IMR-90 (cell line): ENCODE measurements at regions of chr5 and their contacts with region 1.

Region 1: DNA sequence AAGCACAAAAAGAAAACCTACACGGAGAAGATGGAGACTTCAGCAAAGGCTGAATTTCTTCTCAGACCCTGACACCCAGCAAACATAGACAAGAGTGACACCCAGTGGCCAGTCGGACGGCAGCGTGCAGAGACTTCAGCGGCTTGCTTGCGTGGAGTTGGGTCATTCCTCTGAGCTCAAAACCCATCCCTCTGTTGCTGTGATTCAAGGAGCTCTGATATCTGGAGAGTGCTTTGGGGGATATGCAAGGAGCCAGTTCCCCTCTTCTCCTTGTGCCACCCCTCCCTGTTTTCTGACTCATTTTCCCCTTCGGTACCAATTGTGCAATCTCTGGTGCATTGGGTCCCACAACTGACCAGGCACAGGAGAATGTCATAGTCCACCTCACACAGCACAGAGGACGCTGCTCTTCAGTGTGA is 27.5 kb downstream of the SH3TC2 start:
- DNase-seq: peak; percentile 83
- ATAC-seq: peak; percentile 87
- H3K4me3 ChIP-seq: no peak overlapping the region
- H3K27ac ChIP-seq: no peak overlapping the region
- H3K4me1 ChIP-seq: peaks cover 9% of the 10 kb centered on the region
- H3K27me3 ChIP-seq: no peaks in the 10 kb centered on the region
- CTCF ChIP-seq: peak; percentile 98
- POLR2A ChIP-seq: peak; percentile 34; the same call in 1 of the 2 replicates
- RAD21 ChIP-seq: peak; percentile 98

Region 2: DNA sequence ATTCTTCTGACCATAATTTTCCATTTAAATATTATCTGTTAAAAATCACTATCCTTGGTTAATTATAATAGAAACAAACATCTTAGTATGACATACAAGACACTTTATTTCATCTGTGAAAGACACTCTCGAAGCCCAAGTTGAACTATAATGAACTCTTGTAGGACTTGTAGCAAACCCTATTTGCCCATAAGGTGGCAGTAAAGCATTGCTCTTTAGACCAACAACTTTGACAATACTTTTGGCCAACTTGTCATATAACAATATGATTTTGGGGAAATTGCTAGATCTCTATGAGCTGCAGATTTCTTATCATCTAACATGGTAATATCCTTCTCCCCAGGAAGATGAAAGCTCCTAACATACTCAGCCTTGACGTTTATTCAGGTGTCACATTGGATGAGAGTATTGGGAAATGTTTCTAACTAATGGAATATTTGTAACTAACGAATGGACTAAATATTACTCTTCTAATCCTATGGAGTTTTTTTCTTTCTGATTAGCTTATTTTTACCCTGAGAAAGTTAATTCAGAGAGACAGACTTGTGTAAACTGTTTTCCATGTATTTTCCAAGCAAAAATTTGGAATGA is 856.1 kb before region 1 on chr5:
- CTCF ChIA-PET with region 1: no interaction called
- POLR2A ChIA-PET with region 1: no interaction called
- dilution Hi-C with region 1: no loop called
- in situ Hi-C with region 1: loop called (anchors 25 kb)
- intact Hi-C with region 1: loop called (anchors 5 kb)
- DNase-seq: peak; percentile 63
- ATAC-seq: peak; percentile 72
- H3K4me3 ChIP-seq: no peak overlapping the region
- H3K27ac ChIP-seq: no peak overlapping the region
- H3K4me1 ChIP-seq: no peaks in the 10 kb centered on the region
- H3K27me3 ChIP-seq: no peaks in the 10 kb centered on the region
- CTCF ChIP-seq: peak; percentile 65
- POLR2A ChIP-seq: no peak
- RAD21 ChIP-seq: peak; percentile 78

Region 3: GRCh38 chr5:148740966-148741742 is 294.2 kb before region 1 on chr5:
- CTCF ChIA-PET with region 1: interaction called, 34 read pairs
- POLR2A ChIA-PET with region 1: no interaction called
- dilution Hi-C with region 1: no loop called
- in situ Hi-C with region 1: loop called (anchors 5 kb)
- intact Hi-C with region 1: loop called (anchors 1 kb)
- DNase-seq: peak; percentile 85
- ATAC-seq: peak; percentile 95
- H3K4me3 ChIP-seq: no peak overlapping the region
- H3K27ac ChIP-seq: no peak overlapping the region
- H3K4me1 ChIP-seq: no peaks in the 10 kb centered on the region
- H3K27me3 ChIP-seq: no peaks in the 10 kb centered on the region
- CTCF ChIP-seq: peak; percentile 85
- POLR2A ChIP-seq: no peak
- RAD21 ChIP-seq: peak; percentile 77

Region 4: GRCh38 chr5:148811756-148812155 is 223.6 kb before region 1 on chr5:
- CTCF ChIA-PET with region 1: no interaction called
- POLR2A ChIA-PET with region 1: no interaction called
- dilution Hi-C with region 1: no loop called
- in situ Hi-C with region 1: no loop called
- intact Hi-C with region 1: no loop called
- DNase-seq: peak; percentile 42
- ATAC-seq: no peak
- H3K4me3 ChIP-seq: no peak overlapping the region
- H3K27ac ChIP-seq: no peak overlapping the region
- H3K4me1 ChIP-seq: peaks cover 5% of the 10 kb centered on the region; the same call in 1 of the 2 replicates
- H3K27me3 ChIP-seq: no peaks in the 10 kb centered on the region
- CTCF ChIP-seq: no peak
- POLR2A ChIP-seq: no peak
- RAD21 ChIP-seq: no peak

Region 5: DNA sequence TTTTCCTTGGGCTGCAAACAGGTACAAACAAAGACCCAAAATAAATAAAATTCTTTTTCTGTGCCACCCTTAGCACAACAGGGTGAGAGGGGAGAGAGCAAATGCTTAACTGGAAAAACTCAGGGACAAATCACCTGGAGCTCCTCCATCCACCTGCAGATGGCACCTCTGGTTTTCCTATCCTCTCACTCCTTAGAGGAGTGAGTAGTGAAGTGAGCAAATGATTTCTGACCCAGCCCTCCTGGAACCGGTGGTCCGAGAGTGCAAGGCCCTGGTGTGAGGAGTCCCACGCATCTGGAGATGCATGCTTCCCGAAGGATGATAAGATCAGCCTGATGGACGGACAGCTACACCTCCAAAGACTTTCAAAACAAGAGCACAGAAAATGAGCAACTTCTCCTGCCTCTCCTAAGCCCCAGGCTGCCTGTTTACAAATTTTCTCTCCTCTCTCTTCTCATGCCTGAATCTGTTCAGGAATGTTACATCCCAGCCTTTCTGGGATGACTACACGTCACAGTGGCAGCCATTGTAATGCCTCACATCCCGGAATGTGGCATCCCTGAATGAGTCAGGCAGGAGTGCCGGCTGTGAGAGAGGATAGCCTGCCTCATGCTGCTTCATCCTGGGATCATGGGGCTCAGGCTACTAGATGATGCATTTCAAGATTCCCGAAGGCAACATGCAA is 122.5 kb before region 1 on chr5:
- CTCF ChIA-PET with region 1: no interaction called
- POLR2A ChIA-PET with region 1: no interaction called
- dilution Hi-C with region 1: no loop called
- in situ Hi-C with region 1: no loop called
- intact Hi-C with region 1: loop called (anchors 1 kb)
- DNase-seq: peak; percentile 99
- ATAC-seq: peak; percentile 80
- H3K4me3 ChIP-seq: no peak overlapping the region
- H3K27ac ChIP-seq: peak overlapping the region; percentile 86
- H3K4me1 ChIP-seq: peaks cover 47% of the 10 kb centered on the region
- H3K27me3 ChIP-seq: no peaks in the 10 kb centered on the region
- CTCF ChIP-seq: peak; percentile 35
- POLR2A ChIP-seq: peak; percentile 15; the same call in 1 of the 2 replicates
- RAD21 ChIP-seq: peak; percentile 37

Region 6: GRCh38 chr5:148998174-148998797 is 37.1 kb before region 1 on chr5:
- CTCF ChIA-PET with region 1: interaction called, 31 read pairs
- POLR2A ChIA-PET with region 1: no interaction called
- dilution Hi-C with region 1: no loop called
- in situ Hi-C with region 1: no loop called
- intact Hi-C with region 1: loop called (anchors 1 kb)
- DNase-seq: peak; percentile 75
- ATAC-seq: peak; percentile 30; the same call in 1 of the 2 replicates
- H3K4me3 ChIP-seq: no peak overlapping the region
- H3K27ac ChIP-seq: no peak overlapping the region
- H3K4me1 ChIP-seq: peaks cover 11% of the 10 kb centered on the region
- H3K27me3 ChIP-seq: no peaks in the 10 kb centered on the region
- CTCF ChIP-seq: peak; percentile 73
- POLR2A ChIP-seq: no peak
- RAD21 ChIP-seq: peak; percentile 82